ENCODE measurements at regions of chr3 and their contacts with region 1.

Region 1: DNA sequence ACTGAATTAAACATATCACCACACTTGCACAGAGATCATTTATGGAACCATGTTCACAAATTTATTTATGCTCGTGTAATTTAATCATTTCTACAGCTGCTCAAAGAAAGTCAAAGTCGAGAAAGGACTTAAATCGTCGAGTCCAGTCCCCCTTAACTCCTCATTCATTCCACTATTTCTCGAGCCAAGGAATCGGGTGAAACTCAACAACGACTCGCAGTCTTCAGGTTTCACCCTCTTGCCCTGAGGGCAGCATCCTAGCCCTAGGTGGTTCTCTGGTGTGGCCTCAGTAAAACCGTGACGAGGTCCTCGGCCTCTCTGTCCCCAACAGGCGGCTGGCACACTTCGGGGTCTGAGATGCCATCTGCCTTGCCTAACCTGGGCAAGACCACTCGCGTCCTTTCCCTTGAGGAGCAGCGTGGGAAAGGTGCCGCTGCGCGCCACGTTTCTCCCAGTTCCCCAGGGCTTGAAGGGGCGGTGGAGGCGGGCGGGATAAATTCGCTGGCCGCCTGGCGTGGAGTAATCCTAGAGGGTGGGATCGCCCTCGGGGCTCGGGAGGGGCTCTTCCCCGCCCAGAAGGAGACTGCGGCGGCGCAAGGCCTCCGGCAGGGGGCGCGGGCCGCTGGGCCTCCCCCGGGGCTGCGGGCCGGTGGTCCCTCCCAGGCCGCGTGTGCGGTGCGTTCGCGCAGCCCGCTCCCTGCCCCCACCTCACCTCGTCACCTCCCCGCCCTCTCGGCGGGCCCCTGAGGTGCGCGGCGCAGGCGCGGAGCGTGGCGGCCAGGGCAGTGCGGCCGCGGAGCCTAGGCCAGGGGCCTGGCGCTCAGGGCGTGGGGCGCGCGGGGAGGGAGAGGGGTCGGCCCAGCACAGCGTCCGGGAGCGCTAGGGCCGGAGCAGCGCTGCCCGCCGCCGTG is at the start of gene ZNF639:
- DNase-seq: no peak
- H3K4me3 ChIP-seq: peak within 1 kb of the TSS; percentile 86
- CTCF ChIP-seq: peak; percentile 66

Region 2: GRCh38 chr3:178436773-178437172 is 885.8 kb before region 1 on chr3:
- CTCF ChIA-PET with region 1: interaction called, 45 read pairs
- POLR2A ChIA-PET with region 1: no interaction called
- DNase-seq: no peak
- H3K4me3 ChIP-seq: no peak overlapping the region
- CTCF ChIP-seq: peak; percentile 19

Region 3: GRCh38 chr3:179037351-179037750 is 285.2 kb before region 1 on chr3:
- CTCF ChIA-PET with region 1: interaction called, 13 read pairs
- POLR2A ChIA-PET with region 1: interaction called, 3 read pairs
- DNase-seq: peak; percentile 75
- H3K4me3 ChIP-seq: no peak overlapping the region
- CTCF ChIP-seq: no peak

Region 4: DNA sequence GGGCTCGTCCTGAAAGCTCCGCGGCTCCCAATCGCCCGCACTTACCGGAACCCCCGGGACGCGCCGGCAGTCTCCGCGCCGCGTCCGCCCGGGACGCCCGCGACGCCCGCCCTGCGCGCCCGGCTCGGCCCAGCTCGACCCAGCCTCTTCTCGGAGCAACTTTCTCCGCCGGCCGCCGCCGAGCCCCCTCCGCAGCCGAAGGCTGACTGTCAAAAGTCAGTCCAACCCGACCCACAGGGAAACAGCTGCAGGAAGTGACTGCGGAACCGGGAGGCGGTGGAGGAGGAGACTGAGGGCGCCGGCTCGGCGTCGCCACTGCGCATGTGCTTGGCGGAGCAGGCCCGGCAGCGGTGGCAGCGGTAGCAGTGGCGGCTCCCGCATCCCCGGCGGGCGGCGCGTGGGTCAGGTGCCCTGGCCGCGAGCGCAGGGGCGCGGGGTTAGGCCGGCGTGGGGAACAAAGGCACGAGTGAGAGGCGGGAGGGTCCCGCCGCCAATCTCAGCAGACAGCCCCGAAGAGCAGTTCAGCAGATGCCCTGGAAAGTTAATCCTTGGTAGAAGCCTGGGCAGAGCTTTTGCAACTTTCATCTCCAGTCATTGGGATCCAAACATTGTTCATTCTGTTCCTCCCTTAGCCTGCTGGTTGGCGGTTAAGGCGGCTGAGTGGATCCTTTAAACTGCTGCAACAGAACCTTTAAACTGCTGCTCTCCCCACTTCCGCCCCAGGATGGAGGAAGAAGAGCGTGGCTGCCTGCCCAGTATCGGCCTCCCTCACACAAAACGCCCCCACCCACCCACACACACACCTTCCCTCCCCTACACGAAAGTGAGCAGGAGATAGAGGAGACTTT is 250.8 kb before region 1 on chr3 and contains the start of gene ZMAT3:
- CTCF ChIA-PET with region 1: interaction called, 76 read pairs
- POLR2A ChIA-PET with region 1: interaction called, 3 read pairs
- DNase-seq: no peak
- H3K4me3 ChIP-seq: peak within 1 kb of the TSS; percentile 92
- CTCF ChIP-seq: no peak

Region 5: DNA sequence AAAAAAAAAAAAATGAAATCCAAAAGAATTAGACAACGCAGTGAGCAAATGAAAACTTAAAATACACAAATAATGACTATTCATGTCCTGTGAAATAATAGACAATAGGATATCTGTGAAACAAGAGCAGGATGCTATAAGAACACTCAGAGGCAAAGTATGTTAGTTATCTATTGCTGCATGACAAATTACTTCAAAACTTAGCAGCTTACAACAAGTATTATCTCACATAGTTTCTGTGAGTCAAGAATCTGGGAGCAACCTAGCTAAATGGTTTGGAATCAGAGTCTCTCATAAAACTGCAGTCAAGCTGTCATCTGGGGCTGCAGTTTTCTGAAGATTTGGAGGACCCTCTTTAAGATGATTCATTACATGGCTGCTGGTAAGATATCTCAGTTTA is 214.5 kb before region 1 on chr3:
- CTCF ChIA-PET with region 1: interaction called, 347 read pairs
- POLR2A ChIA-PET with region 1: no interaction called
- DNase-seq: no peak
- H3K4me3 ChIP-seq: no peak overlapping the region
- CTCF ChIP-seq: no peak

Region 6: GRCh38 chr3:179147873-179148615 is 174.5 kb before region 1 on chr3 and contains the start of gene PIK3CA:
- CTCF ChIA-PET with region 1: interaction called, 22 read pairs
- POLR2A ChIA-PET with region 1: no interaction called
- DNase-seq: peak; percentile 91
- H3K4me3 ChIP-seq: peak within 1 kb of the TSS; percentile 69
- CTCF ChIP-seq: no peak

Region 7: DNA sequence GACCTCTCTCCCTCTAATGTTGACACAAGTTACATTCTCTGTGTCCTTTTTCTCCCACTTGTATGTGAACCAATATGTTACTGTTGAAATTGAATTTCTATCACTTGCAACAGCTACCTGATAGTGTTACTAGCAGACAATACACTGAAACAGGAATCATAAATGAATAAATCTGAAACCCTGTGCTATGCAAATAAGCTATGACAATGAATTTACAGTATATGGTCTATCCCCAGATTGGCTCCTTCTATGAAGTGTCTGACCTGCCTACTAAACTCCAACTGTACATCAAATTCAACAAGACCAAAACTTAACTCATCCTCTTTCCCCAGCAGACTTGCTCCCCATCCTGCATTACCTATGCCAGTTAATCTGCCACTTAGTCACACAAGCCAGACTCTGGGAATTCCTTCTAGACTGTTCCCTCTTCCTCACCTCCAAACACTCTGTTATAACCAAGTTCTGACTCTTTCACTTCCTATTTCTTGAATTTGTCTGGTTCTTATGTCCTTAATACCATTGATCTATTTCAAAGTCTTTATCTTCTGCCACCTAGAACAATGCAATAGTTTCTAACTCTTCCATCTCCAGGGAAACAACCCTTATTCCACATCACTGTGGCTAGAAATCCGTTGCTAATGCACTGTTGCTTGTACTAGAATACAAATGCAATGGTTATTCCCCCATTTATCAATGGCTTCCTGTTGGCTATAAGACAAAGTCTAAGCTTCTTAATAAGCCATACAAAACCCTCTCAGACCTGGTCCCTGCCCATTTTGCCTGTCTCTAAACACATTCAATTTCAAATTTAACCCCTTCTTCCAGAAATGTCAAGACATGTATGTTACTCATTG is 13.1 kb before region 1 on chr3:
- CTCF ChIA-PET with region 1: interaction called, 15 read pairs
- POLR2A ChIA-PET with region 1: no interaction called
- DNase-seq: no peak
- H3K4me3 ChIP-seq: no peak overlapping the region
- CTCF ChIP-seq: no peak

Measured in AG04449 (cell line).